ENCODE measurements at regions of chr5 and their contacts with region 1.

Region 1: GRCh38 chr5:179345433-179346321 is at the start of gene ADAMTS2:
- DNase-seq: peak; percentile 43 to 74
- ATAC-seq: peak in 6 of 8 donors; percentile 23 to 74 (median 43)
- H3K4me3 ChIP-seq: peak within 1 kb of the TSS; percentile 32 to 66 (median 60)
- H3K27ac ChIP-seq: peak within 1 kb of the TSS in 6 of 10 donors; percentile 15 to 83 (median 60)
- H3K4me1 ChIP-seq: peaks cover 8 to 46% (median 19%) of the 10 kb centered on the region in 9 donors
- H3K27me3 ChIP-seq: peaks cover 7 to 78% (median 57%) of the 10 kb centered on the region in 7 donors
- CTCF ChIP-seq: peak in 3 of 9 donors; percentile 4 to 27 (median 24)
- total RNA-seq, gene ADAMTS2: 1.7 to 13.5 (median 3.0) TPM

Region 2: DNA sequence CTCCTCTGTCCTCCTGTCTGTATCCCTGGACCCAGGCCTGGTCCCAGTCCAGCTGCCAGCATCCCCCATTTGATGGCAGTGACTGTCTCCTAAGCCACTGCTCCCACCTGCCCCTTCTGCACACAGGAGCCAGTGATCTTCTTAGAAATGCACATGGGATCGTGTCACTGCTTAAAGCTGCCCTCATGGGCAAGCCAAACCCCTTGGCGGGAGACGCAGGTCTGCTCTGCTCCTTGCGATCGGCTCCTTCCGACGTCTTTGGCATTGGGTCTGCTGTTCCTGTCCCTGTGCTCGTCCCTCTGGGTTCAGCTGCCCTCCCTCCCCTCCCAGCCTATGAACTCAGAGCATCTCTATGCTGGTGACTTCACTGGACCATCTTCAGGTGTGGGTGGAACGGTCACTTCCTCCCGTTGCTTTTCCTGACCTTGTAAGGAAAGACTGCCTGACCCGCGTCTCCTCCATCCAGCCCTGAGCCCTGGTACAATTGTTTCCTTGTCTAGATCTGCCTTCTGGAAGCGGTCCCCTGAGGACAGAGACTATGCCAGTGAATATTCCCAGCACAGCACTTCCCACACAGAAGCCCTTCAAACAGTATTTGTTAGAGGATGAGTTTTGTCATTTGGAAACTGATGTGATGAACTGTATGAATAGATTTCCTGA is 169.0 kb before region 1 on chr5:
- intact Hi-C with region 1: loop called in 2 of 10 experiments (anchors 5 to 10 kb)
- DNase-seq: no peak
- ATAC-seq: no peak
- H3K4me3 ChIP-seq: no peak overlapping the region
- H3K27ac ChIP-seq: no peak overlapping the region
- H3K4me1 ChIP-seq: no peaks in the 10 kb centered on the region
- H3K27me3 ChIP-seq: peaks cover 0 to 19% (median 0%) of the 10 kb centered on the region in 7 donors
- CTCF ChIP-seq: no peak

Region 3: DNA sequence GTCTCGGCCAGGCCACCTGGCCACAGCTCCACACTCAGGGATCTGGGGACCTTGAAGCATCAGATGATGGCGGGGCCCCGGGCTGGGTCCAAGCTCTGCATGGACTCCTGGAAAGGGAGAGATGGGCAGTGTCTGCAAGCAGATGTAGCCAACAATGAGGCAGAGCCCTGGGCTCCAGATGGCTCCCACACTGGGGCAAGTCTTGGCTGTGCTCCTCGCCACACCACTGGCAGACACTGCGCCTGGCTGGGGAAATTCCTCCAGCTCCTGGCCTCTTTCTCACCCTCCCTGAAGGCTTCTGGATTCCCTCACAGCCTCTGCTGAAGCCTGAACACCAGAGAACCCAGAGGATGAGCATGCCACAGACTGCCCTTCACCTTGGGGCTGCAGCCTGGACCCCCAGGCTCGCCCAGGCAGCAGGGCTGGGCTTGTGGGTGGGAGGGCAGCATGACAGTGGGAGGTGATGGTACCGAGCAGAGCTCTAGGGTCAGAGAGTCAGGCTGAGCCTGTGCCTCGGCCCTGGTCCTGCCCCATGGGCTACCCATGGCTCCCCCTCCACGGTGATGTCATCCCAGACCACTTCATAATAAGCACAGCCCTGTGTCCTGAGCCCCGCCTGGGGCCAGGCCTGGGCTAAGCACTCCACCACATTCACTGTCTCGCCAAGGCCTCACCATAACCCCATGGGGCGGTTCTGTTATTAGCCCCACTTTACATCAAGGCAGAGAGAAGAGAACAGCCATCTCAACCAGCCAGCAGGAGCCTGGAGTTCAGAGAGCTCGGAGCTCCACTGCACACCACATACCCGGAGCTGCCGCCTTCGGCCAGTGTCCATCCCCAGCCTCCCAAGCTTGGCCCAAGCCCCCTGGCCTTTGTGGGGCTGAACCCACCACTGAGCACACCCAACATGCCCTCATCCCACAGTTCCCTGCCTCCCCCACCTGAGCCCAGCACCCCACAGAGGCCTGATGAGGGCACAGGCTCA is 61.8 kb after region 1 on chr5:
- intact Hi-C with region 1: no loop called
- DNase-seq: no peak
- ATAC-seq: peak in 1 of 8 donors; percentile 38
- H3K4me3 ChIP-seq: no peak overlapping the region
- H3K27ac ChIP-seq: peak overlapping the region in 2 of 10 donors; percentile 14 to 31
- H3K4me1 ChIP-seq: peaks cover 0 to 8% (median 0%) of the 10 kb centered on the region in 9 donors
- H3K27me3 ChIP-seq: peaks cover 0 to 6% (median 0%) of the 10 kb centered on the region in 7 donors
- CTCF ChIP-seq: no peak